ENCODE measurements at regions of chr9 and their contacts with region 1.

Region 1: DNA sequence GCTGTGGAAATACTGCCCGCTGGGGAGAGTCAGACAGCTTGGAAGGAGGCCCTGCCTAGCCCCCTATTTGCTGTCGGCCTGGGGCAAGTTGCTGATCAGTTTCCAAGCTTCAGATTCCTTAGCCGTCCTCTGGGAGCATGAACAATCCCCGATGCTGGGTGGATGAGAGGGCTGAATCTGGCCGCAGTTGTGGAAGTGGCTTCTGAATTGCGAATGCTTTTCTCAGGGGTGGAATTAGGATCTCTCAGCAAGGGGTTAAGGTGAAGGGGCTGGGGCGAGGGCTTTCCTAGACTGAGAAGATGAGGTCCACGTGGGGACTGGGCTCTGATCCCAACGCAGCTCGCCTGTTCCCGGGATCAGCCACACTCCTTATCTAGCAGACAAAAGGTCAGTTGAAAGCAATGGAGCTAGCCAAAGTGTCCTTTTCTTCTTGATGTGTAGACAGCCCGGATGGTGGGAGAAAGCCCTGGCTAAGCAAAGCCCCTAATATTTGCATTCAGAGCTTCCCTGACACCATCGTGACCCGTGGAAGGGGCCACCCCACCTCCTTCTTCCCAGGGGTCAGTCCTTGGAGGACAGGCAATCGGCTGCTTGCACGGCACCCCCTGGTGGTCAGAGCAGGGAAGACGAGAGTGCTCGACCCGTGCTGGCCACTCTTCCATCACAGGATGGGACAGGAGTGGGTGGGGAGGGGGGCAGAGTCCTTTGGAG is 54.9 kb downstream of the COL15A1 start:
- DNase-seq: peak; percentile 60 to 81
- ATAC-seq: peak; percentile 91 to 97
- H3K4me3 ChIP-seq: no peak overlapping the region
- H3K27ac ChIP-seq: peak overlapping the region; percentile 33 to 37; a peak in 4 of 6 replicates
- H3K4me1 ChIP-seq: peaks cover 21% of the 10 kb centered on the region
- CTCF ChIP-seq: peak; percentile 71
- EP300 ChIP-seq: no peak
- POLR2A ChIP-seq: no peak
- RAD21 ChIP-seq: peak; percentile 73

Region 2: GRCh38 chr9:98610176-98610575 is 388.4 kb before region 1 on chr9:
- CTCF ChIA-PET with region 1: no interaction called
- POLR2A ChIA-PET with region 1: no interaction called
- DNase-seq: no peak
- ATAC-seq: no peak
- H3K4me3 ChIP-seq: no peak overlapping the region
- H3K27ac ChIP-seq: no peak overlapping the region
- H3K4me1 ChIP-seq: no peaks in the 10 kb centered on the region
- CTCF ChIP-seq: no peak
- EP300 ChIP-seq: no peak
- POLR2A ChIP-seq: no peak
- RAD21 ChIP-seq: no peak

Region 3: DNA sequence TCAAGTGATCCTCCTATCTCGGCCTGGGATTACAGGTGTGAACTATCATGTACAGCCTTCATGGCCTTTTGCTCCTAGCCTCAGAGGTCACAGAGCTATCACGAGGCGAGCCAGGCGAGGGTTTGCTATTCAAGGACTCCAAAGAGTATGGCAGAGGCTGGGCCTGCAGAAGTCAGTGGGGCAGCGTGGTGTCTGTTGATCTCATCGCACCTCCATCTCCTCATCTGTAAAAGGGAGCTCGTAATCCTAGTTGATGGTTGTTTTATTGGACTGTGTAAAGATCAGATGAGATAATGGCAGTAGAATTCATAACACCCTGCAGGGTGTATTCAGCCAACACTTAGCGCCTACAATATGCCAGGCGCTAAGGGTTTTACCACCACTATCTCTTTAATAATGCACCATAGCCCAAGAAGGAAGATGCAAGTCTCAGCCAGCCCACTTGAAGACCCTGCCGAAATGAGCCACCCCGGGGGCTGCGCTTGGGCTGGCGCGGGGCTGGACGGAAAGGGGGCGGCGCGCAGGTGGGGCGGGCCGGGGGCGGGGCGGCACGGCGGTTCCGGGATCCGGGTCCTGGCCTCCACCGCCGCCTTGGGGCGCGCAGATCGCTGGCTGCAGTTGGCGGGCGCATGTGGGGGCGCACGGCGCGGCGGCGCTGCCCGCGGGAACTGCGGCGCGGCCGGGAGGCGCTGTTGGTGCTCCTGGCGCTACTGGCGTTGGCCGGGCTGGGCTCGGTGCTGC is 191.4 kb before region 1 on chr9 and contains the start of gene GALNT12:
- CTCF ChIA-PET with region 1: interaction called, 17 read pairs
- POLR2A ChIA-PET with region 1: no interaction called
- DNase-seq: peak; percentile 36 to 52
- ATAC-seq: peak; percentile 80 to 83
- H3K4me3 ChIP-seq: peak within 1 kb of the TSS; percentile 75
- H3K27ac ChIP-seq: peak within 1 kb of the TSS; percentile 78 to 93
- H3K4me1 ChIP-seq: peaks cover 24% of the 10 kb centered on the region
- CTCF ChIP-seq: no peak; the same call in 1 of the 3 replicates
- EP300 ChIP-seq: no peak
- POLR2A ChIP-seq: peak; percentile 94
- RAD21 ChIP-seq: no peak
- polyA plus RNA-seq, gene GALNT12: 7.3 and 7.7 TPM in 2 replicates

Region 4: GRCh38 chr9:98860871-98861293 is 137.7 kb before region 1 on chr9:
- CTCF ChIA-PET with region 1: interaction called, 28 read pairs
- POLR2A ChIA-PET with region 1: no interaction called
- DNase-seq: peak; percentile 21 to 48
- ATAC-seq: peak; percentile 73 to 79; a peak in 5 of 6 replicates
- H3K4me3 ChIP-seq: no peak overlapping the region
- H3K27ac ChIP-seq: no peak overlapping the region
- H3K4me1 ChIP-seq: peaks cover 5% of the 10 kb centered on the region; the same call in 1 of the 3 replicates
- CTCF ChIP-seq: peak; percentile 21; the same call in 2 of the 3 replicates
- EP300 ChIP-seq: no peak
- POLR2A ChIP-seq: no peak
- RAD21 ChIP-seq: peak; percentile 49 to 55

Region 5: DNA sequence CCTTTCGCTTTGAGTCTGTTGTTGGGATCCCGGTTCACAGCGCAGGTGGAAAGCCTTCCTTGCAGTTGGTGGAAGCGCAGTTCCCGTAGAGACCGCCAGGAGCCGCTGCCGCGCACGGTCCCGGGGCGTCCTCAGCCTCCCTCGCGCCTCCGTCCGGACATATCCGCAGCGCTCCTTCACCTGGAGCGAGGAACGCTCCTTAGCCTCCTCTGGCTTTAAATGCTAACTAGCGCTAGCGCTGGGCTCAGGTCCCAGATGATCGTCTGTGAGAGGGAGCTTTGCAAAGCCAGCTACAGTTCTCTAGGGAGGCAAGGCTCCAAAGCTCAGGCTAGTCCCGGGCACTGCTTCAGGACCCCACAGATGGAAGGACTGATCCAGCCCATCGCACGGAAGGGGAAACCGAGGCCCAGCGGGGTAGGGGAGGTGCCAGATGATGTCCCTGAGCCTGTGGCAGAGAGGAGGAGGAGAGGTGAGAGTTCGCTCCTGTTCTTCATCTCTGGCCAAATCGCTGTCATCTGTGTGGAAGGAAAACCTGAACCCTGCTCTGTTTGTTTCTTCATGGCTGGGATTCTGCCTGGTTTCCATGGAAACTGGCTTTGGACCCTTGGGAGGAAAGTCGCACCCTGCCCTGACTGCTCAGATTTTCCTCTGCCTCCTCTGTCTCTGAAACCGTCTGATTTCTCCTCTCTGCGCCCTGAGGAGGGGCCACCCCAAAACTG is 23.4 kb before region 1 on chr9:
- CTCF ChIA-PET with region 1: interaction called, 125 read pairs
- POLR2A ChIA-PET with region 1: no interaction called
- DNase-seq: peak; percentile 75 to 86
- ATAC-seq: peak; percentile 90 to 97
- H3K4me3 ChIP-seq: peak overlapping the region; percentile 24; the same call in 2 of the 3 replicates
- H3K27ac ChIP-seq: peak overlapping the region in 1 of 2 experiments; percentile 31; a peak in 1 of 6 replicates
- H3K4me1 ChIP-seq: peaks cover 4% of the 10 kb centered on the region; the same call in 1 of the 3 replicates
- CTCF ChIP-seq: peak; percentile 82
- EP300 ChIP-seq: no peak
- POLR2A ChIP-seq: no peak
- RAD21 ChIP-seq: peak; percentile 73 to 82

Region 6: GRCh38 chr9:99019790-99020331 is 21.3 kb after region 1 on chr9:
- CTCF ChIA-PET with region 1: interaction called, 86 read pairs
- POLR2A ChIA-PET with region 1: no interaction called
- DNase-seq: peak; percentile 35 to 62
- ATAC-seq: peak; percentile 79 to 84
- H3K4me3 ChIP-seq: no peak overlapping the region
- H3K27ac ChIP-seq: peak overlapping the region; percentile 70 to 75
- H3K4me1 ChIP-seq: peaks cover 19% of the 10 kb centered on the region
- CTCF ChIP-seq: no peak
- EP300 ChIP-seq: no peak; a peak in 2 of 5 replicates
- POLR2A ChIP-seq: no peak
- RAD21 ChIP-seq: no peak

Region 7: DNA sequence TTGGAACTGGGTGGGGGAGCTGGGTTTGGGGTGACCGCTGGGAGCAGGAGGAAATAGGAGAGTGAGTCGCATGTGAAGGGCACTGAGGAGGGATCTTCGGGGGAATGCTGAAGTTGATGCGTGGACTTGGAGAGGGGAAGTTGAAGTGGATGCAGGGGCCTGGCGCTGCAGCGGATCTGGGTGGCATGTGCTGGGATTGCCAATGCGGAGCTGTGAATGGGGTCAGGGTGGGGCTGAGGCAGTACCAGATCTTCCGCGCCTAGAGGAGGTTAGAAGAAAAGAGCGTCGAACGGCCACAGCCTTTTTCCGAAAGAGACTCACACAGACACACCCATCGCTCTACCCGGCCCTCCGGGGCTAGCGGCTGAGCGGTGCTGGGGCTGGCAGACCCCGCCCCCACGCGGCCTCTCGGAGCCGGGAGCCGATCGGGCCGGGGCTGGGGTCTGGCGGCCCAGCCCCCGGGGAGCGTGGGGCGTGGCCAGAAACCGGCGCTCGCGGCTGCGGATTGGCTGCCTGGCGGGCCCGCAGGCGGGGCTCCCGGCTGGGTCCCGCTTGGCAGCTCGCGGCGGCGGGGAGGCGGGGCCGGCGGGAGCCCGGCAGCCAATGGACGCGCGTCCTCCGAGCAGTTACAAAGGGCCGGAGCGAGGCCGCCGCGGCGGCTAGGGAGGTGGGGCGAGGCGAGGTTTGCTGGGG is 106.0 kb after region 1 on chr9 and contains the start of gene TGFBR1:
- CTCF ChIA-PET with region 1: interaction called, 16 read pairs
- POLR2A ChIA-PET with region 1: interaction called, 4 read pairs
- DNase-seq: peak; percentile 87 to 89
- ATAC-seq: peak; percentile 86 to 90
- H3K4me3 ChIP-seq: peak within 1 kb of the TSS; percentile 83
- H3K27ac ChIP-seq: peak within 1 kb of the TSS; percentile 91 to 94
- H3K4me1 ChIP-seq: peaks cover 32% of the 10 kb centered on the region
- CTCF ChIP-seq: no peak
- EP300 ChIP-seq: no peak
- POLR2A ChIP-seq: no peak; the same call in 1 of the 2 replicates
- RAD21 ChIP-seq: no peak
- polyA plus RNA-seq, gene TGFBR1: 45.5 and 77.1 TPM in 2 replicates

Region 8: GRCh38 chr9:99296291-99296951 is 297.8 kb after region 1 on chr9:
- CTCF ChIA-PET with region 1: no interaction called
- POLR2A ChIA-PET with region 1: no interaction called
- DNase-seq: no peak
- ATAC-seq: no peak
- H3K4me3 ChIP-seq: no peak overlapping the region
- H3K27ac ChIP-seq: no peak overlapping the region
- H3K4me1 ChIP-seq: no peaks in the 10 kb centered on the region
- CTCF ChIP-seq: no peak
- EP300 ChIP-seq: no peak
- POLR2A ChIP-seq: no peak
- RAD21 ChIP-seq: no peak